H1 (cell line): ENCODE measurements at regions of chr16 and their contacts with region 1.

Region 1: DNA sequence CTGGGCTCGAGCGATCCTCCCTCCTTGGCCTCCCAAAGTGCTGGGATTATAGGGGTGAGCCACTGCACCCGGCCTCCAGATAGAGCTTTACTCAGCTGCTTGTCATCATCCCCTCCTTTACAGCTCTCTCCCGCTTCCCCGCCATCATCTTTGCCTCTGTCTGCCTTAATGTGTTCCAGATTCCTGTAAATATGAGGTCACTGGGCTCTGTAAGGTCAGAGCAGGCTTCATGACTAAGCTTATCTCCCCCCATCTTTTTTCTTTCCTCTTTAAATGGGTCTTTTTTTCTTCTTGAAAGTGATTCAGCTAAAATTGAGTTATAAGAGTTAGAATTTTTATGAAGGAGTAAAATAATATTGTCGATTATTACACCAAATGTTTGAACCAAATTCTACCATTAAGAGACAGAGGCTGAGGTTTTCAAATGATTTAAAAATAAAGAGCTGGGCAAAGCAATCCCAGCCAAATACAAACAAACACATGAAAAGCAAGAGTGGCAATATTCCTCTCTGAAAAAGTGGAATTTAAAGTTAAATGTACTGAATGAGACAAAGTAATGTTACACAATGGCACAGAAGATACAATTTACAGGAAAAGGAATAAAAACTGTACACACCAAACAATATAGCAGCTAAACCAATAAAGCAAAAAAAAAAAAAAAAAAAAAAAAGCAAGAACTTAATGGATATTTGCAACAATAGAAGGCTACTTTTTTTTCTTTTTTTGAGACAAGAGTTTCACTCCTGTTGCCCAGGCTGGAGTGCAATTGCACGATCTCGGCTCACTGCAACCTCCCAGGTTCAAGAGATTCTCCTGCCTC is 62.1 kb downstream of the CRISPLD2 start:
- DNase-seq: no peak
- H3K4me3 ChIP-seq: no peak overlapping the region
- H3K27ac ChIP-seq: no peak overlapping the region
- H3K4me1 ChIP-seq: peaks cover 7 to 20% (median 13%) of the 10 kb centered on the region in 4 experiments
- H3K27me3 ChIP-seq: no peaks in the 10 kb centered on the region
- CTCF ChIP-seq: no peak
- EP300 ChIP-seq: no peak
- POLR2A ChIP-seq: no peak
- RAD21 ChIP-seq: no peak

Region 2: GRCh38 chr16:84864326-84864955 is 17.5 kb before region 1 on chr16:
- CTCF ChIA-PET with region 1: interaction called, 14 read pairs
- POLR2A ChIA-PET with region 1: interaction called, 3 read pairs
- DNase-seq: no peak
- H3K4me3 ChIP-seq: no peak overlapping the region
- H3K27ac ChIP-seq: no peak overlapping the region
- H3K4me1 ChIP-seq: no peaks in the 10 kb centered on the region
- H3K27me3 ChIP-seq: no peaks in the 10 kb centered on the region
- CTCF ChIP-seq: no peak
- EP300 ChIP-seq: no peak
- POLR2A ChIP-seq: no peak
- RAD21 ChIP-seq: no peak

Region 3: DNA sequence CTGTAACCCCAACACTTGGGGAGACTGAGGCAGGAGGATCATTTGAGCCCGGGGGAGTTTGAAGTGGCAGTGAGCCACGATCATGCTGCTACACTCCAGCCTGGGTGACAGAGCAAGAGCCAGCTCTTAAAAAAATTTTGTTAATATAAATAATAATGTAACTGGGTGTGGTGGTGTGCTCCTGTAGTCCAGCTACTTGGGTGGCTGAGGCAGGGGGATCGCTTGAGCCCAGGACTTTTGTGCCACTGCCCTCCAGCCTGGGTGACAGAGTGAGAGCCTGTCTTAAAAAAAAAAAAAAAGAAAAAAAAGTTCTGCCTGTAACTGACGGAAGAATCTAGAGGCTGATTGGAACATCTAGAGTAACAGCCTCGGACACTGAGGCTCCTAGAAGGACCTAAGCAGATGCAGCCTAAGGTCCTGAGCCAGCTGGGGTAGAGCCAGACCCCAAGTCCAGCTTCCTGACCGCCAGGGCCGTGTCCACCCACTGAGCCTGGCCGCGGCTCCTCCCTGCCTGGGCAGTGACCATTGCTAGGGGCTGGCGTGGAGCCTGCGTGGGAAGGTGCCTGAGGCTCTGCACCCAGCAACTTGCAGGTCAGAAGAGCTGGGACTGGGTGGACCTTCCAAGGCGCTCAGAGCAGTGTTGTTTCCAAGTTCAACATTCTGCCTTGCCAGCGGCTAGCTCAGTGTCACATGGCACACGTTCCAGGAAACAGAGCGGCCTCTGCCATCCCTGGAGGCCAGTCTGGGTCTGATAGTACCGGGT is 439.8 kb after region 1 on chr16:
- CTCF ChIA-PET with region 1: no interaction called
- POLR2A ChIA-PET with region 1: no interaction called
- DNase-seq: no peak
- H3K4me3 ChIP-seq: no peak overlapping the region
- H3K27ac ChIP-seq: no peak overlapping the region
- H3K4me1 ChIP-seq: peaks cover 0 to 8% (median 3%) of the 10 kb centered on the region in 4 experiments; a peak in 4 of 7 replicates
- H3K27me3 ChIP-seq: peaks cover 0 to 1% (median 0%) of the 10 kb centered on the region in 4 experiments; a peak in 3 of 7 replicates
- CTCF ChIP-seq: no peak
- EP300 ChIP-seq: no peak
- POLR2A ChIP-seq: no peak
- RAD21 ChIP-seq: no peak